ENCODE measurements at regions of chr17 and their contacts with region 1.

Region 1: DNA sequence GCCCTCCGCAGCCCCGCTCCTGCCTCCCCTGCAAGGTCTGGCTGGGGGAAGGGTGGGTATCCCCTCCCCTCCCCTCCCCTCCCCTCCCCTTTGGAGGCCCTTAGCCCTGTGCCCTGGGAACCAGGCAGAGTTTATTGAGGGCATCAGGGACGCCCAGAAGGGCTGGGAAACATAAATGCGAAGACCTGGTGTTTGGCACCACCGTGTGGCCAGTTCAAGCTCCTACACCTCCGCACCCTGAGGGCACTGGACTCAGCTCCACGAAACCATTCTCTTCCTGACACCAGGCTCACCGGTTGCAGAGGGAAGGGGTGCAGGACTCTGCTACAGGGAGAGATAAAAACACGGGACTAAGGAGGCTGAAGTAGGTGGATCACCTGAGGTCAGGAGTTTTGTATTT is 1.0 kb upstream of the AIPL1 start:
- DNase-seq: peak; percentile 42 to 83 (median 55)
- ATAC-seq: peak; percentile 99
- H3K4me3 ChIP-seq: no peak overlapping the region
- H3K4me3 Mint-ChIP-seq: no peak overlapping the region
- H3K27ac ChIP-seq: no peak overlapping the region
- H3K27ac Mint-ChIP-seq: no peak overlapping the region
- H3K4me1 ChIP-seq: peaks cover 3% of the 10 kb centered on the region
- H3K4me1 Mint-ChIP-seq: peaks cover 5% of the 10 kb centered on the region
- H3K27me3 ChIP-seq: peaks cover 5 to 11% of the 10 kb centered on the region in 2 experiments
- H3K27me3 Mint-ChIP-seq: peaks cover 37% of the 10 kb centered on the region
- CTCF ChIP-seq: peak; percentile 77

Region 2: GRCh38 chr17:5592382-5592781 is 843.6 kb before region 1 on chr17:
- CTCF ChIA-PET with region 1: interaction called, 12 read pairs
- POLR2A ChIA-PET with region 1: interaction called, 5 read pairs
- intact Hi-C with region 1: loop called (anchors 1 kb)
- DNase-seq: peak in 3 of 14 experiments; percentile 56 to 68 (median 61)
- ATAC-seq: peak; percentile 65
- H3K4me3 ChIP-seq: no peak overlapping the region
- H3K4me3 Mint-ChIP-seq: no peak overlapping the region
- H3K27ac ChIP-seq: no peak overlapping the region
- H3K27ac Mint-ChIP-seq: no peak overlapping the region
- H3K4me1 ChIP-seq: peaks cover 1% of the 10 kb centered on the region
- H3K4me1 Mint-ChIP-seq: peaks cover 3% of the 10 kb centered on the region
- H3K27me3 ChIP-seq: peaks cover 5% of the 10 kb centered on the region in 2 experiments
- H3K27me3 Mint-ChIP-seq: peaks cover 39% of the 10 kb centered on the region
- CTCF ChIP-seq: peak; percentile 81

Region 3: GRCh38 chr17:5706577-5707216 is 729.3 kb before region 1 on chr17:
- CTCF ChIA-PET with region 1: no interaction called
- POLR2A ChIA-PET with region 1: no interaction called
- intact Hi-C with region 1: loop called in 1 of 2 experiments (anchors 10 kb)
- DNase-seq: peak; percentile 29 to 73 (median 48)
- ATAC-seq: no peak
- H3K4me3 ChIP-seq: no peak overlapping the region
- H3K4me3 Mint-ChIP-seq: no peak overlapping the region
- H3K27ac ChIP-seq: no peak overlapping the region
- H3K27ac Mint-ChIP-seq: no peak overlapping the region
- H3K4me1 ChIP-seq: no peaks in the 10 kb centered on the region
- H3K4me1 Mint-ChIP-seq: no peaks in the 10 kb centered on the region
- H3K27me3 ChIP-seq: peaks cover 2 to 18% of the 10 kb centered on the region in 2 experiments
- H3K27me3 Mint-ChIP-seq: peaks cover 57% of the 10 kb centered on the region
- CTCF ChIP-seq: peak; percentile 51

Region 4: DNA sequence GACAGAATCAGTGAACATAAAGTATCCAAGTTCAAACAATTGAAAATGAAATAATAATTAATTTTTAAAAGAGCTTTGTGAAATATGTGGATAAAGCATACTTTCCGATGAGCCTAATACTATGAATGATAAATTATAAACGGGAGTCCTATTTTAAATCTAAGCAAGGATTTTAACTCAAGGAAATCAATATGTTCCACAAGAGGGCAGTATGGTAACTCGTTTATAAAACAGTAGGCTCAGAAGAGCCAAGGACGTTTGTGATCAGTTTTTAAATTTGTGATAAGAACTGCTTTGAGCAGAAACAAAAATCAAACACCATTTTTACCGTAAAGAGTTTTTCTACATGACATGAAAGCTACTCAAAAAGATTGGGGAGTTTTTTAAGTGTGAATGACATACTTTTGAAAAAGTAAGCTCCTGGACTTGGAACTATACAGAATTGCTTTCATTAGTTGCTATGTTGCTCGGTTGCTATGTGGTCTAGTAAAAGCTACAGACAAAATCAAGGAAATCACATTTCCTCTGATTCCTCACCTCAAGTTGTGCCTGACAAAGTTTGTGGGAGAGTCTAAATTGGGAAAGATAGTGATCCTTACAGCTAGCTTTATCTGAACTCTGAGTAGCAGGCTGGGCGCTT is 407.4 kb after region 1 on chr17:
- CTCF ChIA-PET with region 1: no interaction called
- POLR2A ChIA-PET with region 1: no interaction called
- intact Hi-C with region 1: no loop called
- DNase-seq: peak in 3 of 14 experiments; percentile 45 to 68 (median 68)
- ATAC-seq: no peak
- H3K4me3 ChIP-seq: no peak overlapping the region
- H3K4me3 Mint-ChIP-seq: no peak overlapping the region
- H3K27ac ChIP-seq: no peak overlapping the region
- H3K27ac Mint-ChIP-seq: no peak overlapping the region
- H3K4me1 ChIP-seq: no peaks in the 10 kb centered on the region
- H3K4me1 Mint-ChIP-seq: no peaks in the 10 kb centered on the region
- H3K27me3 ChIP-seq: peaks cover 13 to 24% of the 10 kb centered on the region in 2 experiments
- H3K27me3 Mint-ChIP-seq: peaks cover 55% of the 10 kb centered on the region
- CTCF ChIP-seq: peak; percentile 74